ENCODE measurements at regions of chr17 and their contacts with region 1.

Region 1: DNA sequence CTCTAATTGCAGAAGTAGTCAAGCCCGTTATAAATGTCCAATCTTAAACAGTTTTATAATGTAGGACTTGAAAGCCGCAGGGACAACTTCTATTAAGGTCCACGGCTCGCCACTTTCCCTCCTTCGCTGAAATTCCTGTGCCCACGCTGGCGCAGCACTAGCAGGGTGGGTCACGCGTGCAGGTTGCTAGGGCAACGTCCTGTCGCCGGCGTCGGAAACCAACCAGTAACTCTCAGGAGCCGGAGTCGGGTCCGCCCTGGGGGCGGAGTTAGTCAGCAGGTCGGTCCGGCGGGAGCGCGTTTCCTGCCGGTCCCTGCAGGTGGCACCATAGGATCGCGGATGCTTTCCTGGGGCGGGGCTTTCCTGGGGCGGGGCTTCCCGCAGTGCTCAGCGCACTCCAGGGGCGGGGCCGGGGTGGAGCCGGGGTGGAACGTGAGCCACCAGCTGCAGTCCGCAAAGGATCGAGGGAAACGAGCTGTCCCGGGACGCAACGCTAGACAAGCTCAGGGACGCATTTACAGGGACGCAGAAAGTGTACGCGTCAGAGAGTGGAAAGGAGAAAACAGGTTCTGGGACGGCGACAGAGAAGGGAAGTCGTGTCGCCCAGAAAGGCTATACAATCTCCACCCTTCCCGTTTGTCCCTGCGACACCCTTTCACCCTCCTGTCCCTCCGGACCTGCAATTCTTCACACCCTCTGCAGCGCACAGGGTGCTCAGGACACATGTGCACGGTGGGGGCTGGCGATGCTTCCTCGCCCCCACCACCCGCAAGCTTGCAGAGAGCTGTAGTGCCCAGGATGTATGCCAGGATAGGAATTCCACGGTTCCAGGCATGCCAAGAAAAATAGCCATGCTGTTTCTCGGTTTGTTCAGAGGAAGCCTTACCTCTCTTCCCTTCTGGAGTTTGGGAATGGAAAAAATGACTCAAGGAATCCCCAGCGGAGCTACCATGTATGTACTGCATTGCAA is 12.4 kb downstream of the COPZ2 start:
- DNase-seq: peak; percentile 100
- H3K4me3 ChIP-seq: peak overlapping the region; percentile 43
- H3K4me3 Mint-ChIP-seq: peak overlapping the region; percentile 87
- H3K27ac Mint-ChIP-seq: peak overlapping the region; percentile 89
- H3K4me1 ChIP-seq: peaks cover 26% of the 10 kb centered on the region
- H3K4me1 Mint-ChIP-seq: peaks cover 34% of the 10 kb centered on the region
- H3K27me3 ChIP-seq: peaks cover 5% of the 10 kb centered on the region
- H3K27me3 Mint-ChIP-seq: peaks cover 17% of the 10 kb centered on the region
- CTCF ChIP-seq: peak; percentile 98 to 100

Region 2: GRCh38 chr17:47905221-47905781 is 119.9 kb before region 1 on chr17:
- CTCF ChIA-PET with region 1: no interaction called
- POLR2A ChIA-PET with region 1: no interaction called
- intact Hi-C with region 1: no loop called
- DNase-seq: no peak
- H3K4me3 ChIP-seq: no peak overlapping the region
- H3K4me3 Mint-ChIP-seq: no peak overlapping the region
- H3K27ac Mint-ChIP-seq: no peak overlapping the region
- H3K4me1 ChIP-seq: no peaks in the 10 kb centered on the region
- H3K4me1 Mint-ChIP-seq: no peaks in the 10 kb centered on the region
- H3K27me3 ChIP-seq: no peaks in the 10 kb centered on the region
- H3K27me3 Mint-ChIP-seq: no peaks in the 10 kb centered on the region
- CTCF ChIP-seq: no peak

Region 3: DNA sequence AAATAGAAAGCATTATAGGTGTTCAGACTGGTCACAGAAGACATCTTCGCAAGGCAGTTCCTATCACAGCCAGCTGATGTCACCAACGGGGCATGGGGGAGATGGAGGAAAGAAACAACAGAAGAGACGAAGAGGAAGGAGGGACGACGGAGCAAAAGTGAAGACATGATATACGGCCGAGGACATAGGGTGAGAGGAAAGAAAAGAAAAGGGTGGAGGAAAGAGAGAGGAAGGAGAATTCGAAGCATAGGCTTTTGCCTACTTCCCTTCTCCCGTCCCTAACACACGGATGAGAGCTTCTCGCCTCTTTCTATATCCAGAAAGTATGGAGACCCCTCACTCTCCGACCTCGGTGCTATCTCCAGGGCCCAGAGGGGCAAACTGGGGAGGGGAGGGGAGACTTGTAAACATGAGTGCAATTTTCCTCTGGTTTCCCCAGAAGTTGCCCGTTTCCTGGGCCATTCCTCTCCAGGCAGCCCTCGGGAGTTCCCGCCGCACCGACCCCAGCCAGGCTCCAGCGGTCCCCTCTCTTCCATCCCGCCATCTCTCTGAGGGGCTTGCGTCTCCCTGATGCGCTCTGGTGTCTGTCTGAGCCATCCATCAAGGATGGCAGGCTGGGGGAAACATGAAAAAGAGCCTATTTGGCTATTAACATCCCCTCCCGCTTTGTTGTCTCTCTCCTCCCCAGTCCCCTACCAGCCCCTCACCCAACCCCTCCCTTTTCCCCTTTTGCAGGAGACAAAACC is 13.6 kb before region 1 on chr17:
- CTCF ChIA-PET with region 1: interaction called, 17 read pairs
- POLR2A ChIA-PET with region 1: no interaction called
- intact Hi-C with region 1: no loop called
- DNase-seq: peak; percentile 83
- H3K4me3 ChIP-seq: peak overlapping the region; percentile 48
- H3K4me3 Mint-ChIP-seq: peak overlapping the region; percentile 70
- H3K27ac Mint-ChIP-seq: no peak overlapping the region
- H3K4me1 ChIP-seq: peaks cover 5% of the 10 kb centered on the region
- H3K4me1 Mint-ChIP-seq: peaks cover 6% of the 10 kb centered on the region
- H3K27me3 ChIP-seq: no peaks in the 10 kb centered on the region
- H3K27me3 Mint-ChIP-seq: peaks cover 4% of the 10 kb centered on the region
- CTCF ChIP-seq: peak; percentile 95 to 97

Region 4: DNA sequence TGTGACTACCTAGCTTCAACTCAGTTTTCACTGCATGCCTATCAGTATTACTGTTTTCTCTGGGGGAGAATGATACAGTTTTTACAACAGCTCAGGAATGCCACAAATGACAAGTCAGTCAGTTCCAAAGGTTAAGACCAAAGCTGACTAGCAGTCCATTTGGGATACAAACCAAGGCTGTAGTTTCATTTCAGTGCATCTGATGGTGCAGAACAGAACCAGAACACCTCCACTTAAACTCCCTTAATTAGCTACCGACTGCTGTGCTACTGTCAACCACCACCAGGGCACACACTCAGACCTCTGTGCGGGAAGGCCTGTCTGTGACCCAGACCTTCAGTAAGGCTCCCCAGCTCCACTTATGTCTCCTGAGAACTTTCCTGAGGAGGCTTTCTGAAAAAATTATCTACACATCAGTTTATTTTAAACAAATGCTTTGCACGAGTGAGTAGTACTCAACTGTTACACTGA is 43.3 kb after region 1 on chr17:
- CTCF ChIA-PET with region 1: interaction called, 225 read pairs
- POLR2A ChIA-PET with region 1: interaction called, 4 read pairs
- intact Hi-C with region 1: loop called (anchors 1 kb)
- DNase-seq: peak; percentile 82 to 87
- H3K4me3 ChIP-seq: no peak overlapping the region
- H3K4me3 Mint-ChIP-seq: peak overlapping the region; percentile 22
- H3K27ac Mint-ChIP-seq: peak overlapping the region; percentile 52
- H3K4me1 ChIP-seq: peaks cover 15% of the 10 kb centered on the region
- H3K4me1 Mint-ChIP-seq: peaks cover 34% of the 10 kb centered on the region
- H3K27me3 ChIP-seq: no peaks in the 10 kb centered on the region
- H3K27me3 Mint-ChIP-seq: no peaks in the 10 kb centered on the region
- CTCF ChIP-seq: peak; percentile 82 to 86

Region 5: GRCh38 chr17:48107168-48108132 is 82.2 kb after region 1 on chr17 and contains the start of gene SNX11:
- CTCF ChIA-PET with region 1: interaction called, 44 read pairs
- POLR2A ChIA-PET with region 1: interaction called, 5 read pairs
- intact Hi-C with region 1: loop called (anchors 1 kb)
- DNase-seq: peak; percentile 100
- H3K4me3 ChIP-seq: peak within 1 kb of the TSS; percentile 60
- H3K4me3 Mint-ChIP-seq: peak within 1 kb of the TSS; percentile 95
- H3K27ac Mint-ChIP-seq: peak within 1 kb of the TSS; percentile 95
- H3K4me1 ChIP-seq: 0 out of 2 replicates have a peak, but pooled peaks cover 6% of the 10 kb centered on the region
- H3K4me1 Mint-ChIP-seq: peaks cover 7% of the 10 kb centered on the region
- H3K27me3 ChIP-seq: no peaks in the 10 kb centered on the region
- H3K27me3 Mint-ChIP-seq: no peaks in the 10 kb centered on the region
- CTCF ChIP-seq: peak; percentile 33 to 48
- total RNA-seq, gene SNX11: 36.7 and 40.7 TPM in 2 replicates

Region 6: DNA sequence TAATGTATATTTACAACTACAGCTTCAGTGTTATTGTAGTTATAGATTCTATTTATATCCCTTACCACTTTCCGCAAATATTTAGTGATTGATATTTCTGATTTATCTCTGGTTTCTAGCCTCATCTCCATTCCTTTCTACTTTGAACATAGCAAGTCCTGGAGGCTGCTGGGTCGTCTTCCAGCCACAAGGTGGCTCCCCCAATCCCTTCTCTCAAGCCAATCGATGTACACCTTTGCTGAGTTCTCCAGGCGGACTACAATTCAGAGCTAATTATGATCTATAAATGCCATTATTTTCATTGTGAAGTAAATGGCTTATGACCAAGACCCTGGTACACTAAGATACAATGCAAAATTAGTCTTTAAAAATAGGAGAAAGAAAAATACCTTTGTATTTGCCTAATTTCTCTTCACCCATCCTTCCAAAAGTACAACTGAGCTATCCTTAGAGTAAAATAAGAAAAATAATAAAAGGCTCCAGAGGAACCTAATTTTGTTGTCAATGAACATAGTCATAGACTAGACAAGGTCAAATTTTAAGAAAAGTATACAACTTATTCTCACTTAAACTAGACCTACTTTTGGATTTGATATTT is 282.7 kb after region 1 on chr17:
- CTCF ChIA-PET with region 1: interaction called, 3 read pairs
- POLR2A ChIA-PET with region 1: no interaction called
- intact Hi-C with region 1: loop called (anchors 5 kb)
- DNase-seq: peak; percentile 83
- H3K4me3 ChIP-seq: no peak overlapping the region
- H3K4me3 Mint-ChIP-seq: no peak overlapping the region
- H3K27ac Mint-ChIP-seq: no peak overlapping the region
- H3K4me1 ChIP-seq: peaks cover 15% of the 10 kb centered on the region
- H3K4me1 Mint-ChIP-seq: peaks cover 14% of the 10 kb centered on the region
- H3K27me3 ChIP-seq: no peaks in the 10 kb centered on the region
- H3K27me3 Mint-ChIP-seq: peaks cover 16% of the 10 kb centered on the region
- CTCF ChIP-seq: peak; percentile 99 to 100

Region 7: GRCh38 chr17:48363161-48363560 is 337.9 kb after region 1 on chr17:
- CTCF ChIA-PET with region 1: no interaction called
- POLR2A ChIA-PET with region 1: no interaction called
- intact Hi-C with region 1: no loop called
- DNase-seq: no peak
- H3K4me3 ChIP-seq: no peak overlapping the region
- H3K4me3 Mint-ChIP-seq: no peak overlapping the region
- H3K27ac Mint-ChIP-seq: no peak overlapping the region
- H3K4me1 ChIP-seq: no peaks in the 10 kb centered on the region
- H3K4me1 Mint-ChIP-seq: no peaks in the 10 kb centered on the region
- H3K27me3 ChIP-seq: no peaks in the 10 kb centered on the region
- H3K27me3 Mint-ChIP-seq: peaks cover 19% of the 10 kb centered on the region
- CTCF ChIP-seq: no peak

Region 8: GRCh38 chr17:48555258-48556228 is 530.3 kb after region 1 on chr17:
- CTCF ChIA-PET with region 1: no interaction called
- POLR2A ChIA-PET with region 1: no interaction called
- intact Hi-C with region 1: no loop called
- DNase-seq: peak; percentile 58 to 70
- H3K4me3 ChIP-seq: peak overlapping the region; percentile 28
- H3K4me3 Mint-ChIP-seq: peak overlapping the region; percentile 49
- H3K27ac Mint-ChIP-seq: no peak overlapping the region
- H3K4me1 ChIP-seq: peaks cover 9% of the 10 kb centered on the region
- H3K4me1 Mint-ChIP-seq: peaks cover 7% of the 10 kb centered on the region
- H3K27me3 ChIP-seq: no peaks in the 10 kb centered on the region; the same call in 1 of the 2 replicates
- H3K27me3 Mint-ChIP-seq: no peaks in the 10 kb centered on the region
- CTCF ChIP-seq: no peak

Region 9: DNA sequence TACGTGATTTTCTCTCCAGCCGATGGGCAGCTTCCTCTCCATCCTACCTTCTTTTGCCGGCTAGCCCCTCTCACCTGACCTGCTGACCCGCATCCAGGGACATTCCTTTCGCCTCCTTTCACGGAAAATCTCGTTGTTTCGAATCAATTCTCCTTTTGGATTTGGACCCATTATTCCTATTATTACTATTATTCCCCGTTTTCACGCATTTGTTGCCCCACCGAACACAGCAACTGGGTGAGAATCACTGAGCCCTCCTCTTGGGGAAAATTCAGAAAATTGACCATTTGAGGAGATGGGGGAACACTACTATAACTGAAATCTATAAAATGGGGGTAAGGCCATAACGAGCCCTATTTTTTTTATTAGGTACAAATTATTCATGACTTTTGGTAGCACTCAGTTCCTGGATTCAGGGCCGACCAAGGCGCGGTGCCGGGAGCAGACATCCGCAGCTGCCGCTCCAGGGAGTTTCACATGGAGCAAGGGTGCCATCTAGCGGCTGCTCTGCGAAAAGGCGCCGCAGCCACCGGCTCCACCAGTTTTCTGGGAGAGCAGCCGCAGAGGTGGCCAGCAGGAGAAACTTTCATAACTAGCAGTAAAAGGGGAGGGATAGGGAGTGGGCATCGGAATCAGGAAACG is 593.2 kb after region 1 on chr17:
- CTCF ChIA-PET with region 1: interaction called, 3 read pairs
- POLR2A ChIA-PET with region 1: no interaction called
- intact Hi-C with region 1: loop called (anchors 2 kb)
- DNase-seq: peak; percentile 93 to 98
- H3K4me3 ChIP-seq: peak overlapping the region; percentile 33
- H3K4me3 Mint-ChIP-seq: peak overlapping the region; percentile 63
- H3K27ac Mint-ChIP-seq: peak overlapping the region; percentile 59
- H3K4me1 ChIP-seq: peaks cover 4% of the 10 kb centered on the region
- H3K4me1 Mint-ChIP-seq: peaks cover 33% of the 10 kb centered on the region
- H3K27me3 ChIP-seq: peaks cover 27% of the 10 kb centered on the region
- H3K27me3 Mint-ChIP-seq: peaks cover 69% of the 10 kb centered on the region
- CTCF ChIP-seq: peak; percentile 100

Measured in Caco-2 (cell line).